Activated naive CD8-positive, alpha-beta T cell treated with anti-CD3 and anti-CD28 coated beads, Interleukin-2, amount 10 ng/mL, durations not matched to agents 7 days and 5 days (primary cell): ENCODE measurements at regions of chr12 and their contacts with region 1.

Region 1: DNA sequence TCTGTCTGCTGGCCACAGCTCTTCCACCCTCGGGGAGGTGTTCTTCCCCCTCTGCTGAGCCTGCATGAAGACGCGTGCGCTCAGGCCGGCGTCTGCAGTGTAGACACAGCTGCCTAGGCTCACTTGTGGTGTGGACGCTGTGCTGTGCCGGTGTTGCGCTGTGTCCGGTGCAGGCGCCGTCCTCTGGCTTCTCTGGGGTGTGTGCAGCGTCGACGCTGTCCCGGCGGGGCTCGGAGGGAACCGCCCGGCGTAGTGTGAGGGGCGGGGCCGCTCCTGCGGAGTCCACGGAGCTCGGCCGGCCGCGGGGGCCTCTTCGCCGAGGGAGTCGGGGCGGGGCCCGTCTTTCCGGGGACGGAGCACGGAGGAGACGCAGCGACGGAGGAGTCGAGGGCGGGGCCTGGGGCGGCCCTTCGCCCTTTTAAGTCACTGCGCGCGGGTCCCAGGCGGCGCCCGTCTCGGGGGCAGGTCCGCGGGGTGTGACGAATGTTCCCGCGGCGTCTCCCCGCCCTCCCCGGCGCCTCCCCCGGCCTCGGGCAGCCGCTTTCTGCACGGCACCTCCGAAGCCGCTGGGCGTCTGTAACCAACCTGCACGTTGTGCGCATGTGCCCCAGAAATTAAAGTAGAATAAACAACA is 45.2 kb downstream of the NOC4L start:
- DNase-seq: peak; percentile 96
- ATAC-seq: peak; percentile 92
- H3K4me3 Mint-ChIP-seq: peak overlapping the region; percentile 99
- H3K27ac Mint-ChIP-seq: peak overlapping the region; percentile 95
- H3K4me1 Mint-ChIP-seq: peaks cover 23% of the 10 kb centered on the region
- H3K27me3 Mint-ChIP-seq: peaks cover under 1% of the 10 kb centered on the region

Region 2: GRCh38 chr12:132178801-132179401 is 10.6 kb before region 1 on chr12:
- POLR2A ChIA-PET with region 1: interaction called, 24 read pairs
- DNase-seq: peak; percentile 63
- ATAC-seq: peak; percentile 63
- H3K4me3 Mint-ChIP-seq: peak overlapping the region; percentile 80
- H3K27ac Mint-ChIP-seq: peak overlapping the region; percentile 81
- H3K4me1 Mint-ChIP-seq: peaks cover 22% of the 10 kb centered on the region
- H3K27me3 Mint-ChIP-seq: peaks cover 7% of the 10 kb centered on the region

Region 3: GRCh38 chr12:132214891-132215290 is 25.4 kb after region 1 on chr12:
- POLR2A ChIA-PET with region 1: no interaction called
- DNase-seq: no peak
- ATAC-seq: peak; percentile 35
- H3K4me3 Mint-ChIP-seq: no peak overlapping the region
- H3K27ac Mint-ChIP-seq: no peak overlapping the region
- H3K4me1 Mint-ChIP-seq: peaks cover 3% of the 10 kb centered on the region
- H3K27me3 Mint-ChIP-seq: peaks cover 11% of the 10 kb centered on the region

Region 4: GRCh38 chr12:132228476-132229192 is 39.1 kb after region 1 on chr12:
- POLR2A ChIA-PET with region 1: no interaction called
- DNase-seq: no peak
- ATAC-seq: no peak
- H3K4me3 Mint-ChIP-seq: no peak overlapping the region
- H3K27ac Mint-ChIP-seq: no peak overlapping the region
- H3K4me1 Mint-ChIP-seq: no peaks in the 10 kb centered on the region
- H3K27me3 Mint-ChIP-seq: peaks cover 4% of the 10 kb centered on the region